Dendritic cell treated with granulocyte-macrophage colony-stimulating factor and Interleukin-4, amounts not matched to agents 40 ng/mL and 50 ng/mL, for 4 days (primary cell): ENCODE measurements at regions of chr18 and their contacts with region 1.

Region 1: GRCh38 chr18:70464343-70465114 is 175.7 kb downstream of the SOCS6 start:
- H3K4me3 Mint-ChIP-seq: peak overlapping the region; percentile 61
- H3K27ac Mint-ChIP-seq: no peak overlapping the region
- H3K4me1 Mint-ChIP-seq: peaks cover 25% of the 10 kb centered on the region
- H3K27me3 Mint-ChIP-seq: no peaks in the 10 kb centered on the region

Region 2: GRCh38 chr18:70116949-70117348 is 347.6 kb before region 1 on chr18:
- intact Hi-C with region 1: no loop called
- H3K4me3 Mint-ChIP-seq: no peak overlapping the region
- H3K27ac Mint-ChIP-seq: no peak overlapping the region
- H3K4me1 Mint-ChIP-seq: peaks cover 4% of the 10 kb centered on the region
- H3K27me3 Mint-ChIP-seq: no peaks in the 10 kb centered on the region

Region 3: GRCh38 chr18:70310560-70311320 is 153.8 kb before region 1 on chr18:
- intact Hi-C with region 1: no loop called
- H3K4me3 Mint-ChIP-seq: no peak overlapping the region
- H3K27ac Mint-ChIP-seq: no peak overlapping the region
- H3K4me1 Mint-ChIP-seq: peaks cover 36% of the 10 kb centered on the region
- H3K27me3 Mint-ChIP-seq: no peaks in the 10 kb centered on the region

Region 4: GRCh38 chr18:70337139-70337972 is 127.2 kb before region 1 on chr18:
- intact Hi-C with region 1: no loop called
- H3K4me3 Mint-ChIP-seq: no peak overlapping the region
- H3K27ac Mint-ChIP-seq: no peak overlapping the region
- H3K4me1 Mint-ChIP-seq: peaks cover 8% of the 10 kb centered on the region
- H3K27me3 Mint-ChIP-seq: no peaks in the 10 kb centered on the region

Region 5: DNA sequence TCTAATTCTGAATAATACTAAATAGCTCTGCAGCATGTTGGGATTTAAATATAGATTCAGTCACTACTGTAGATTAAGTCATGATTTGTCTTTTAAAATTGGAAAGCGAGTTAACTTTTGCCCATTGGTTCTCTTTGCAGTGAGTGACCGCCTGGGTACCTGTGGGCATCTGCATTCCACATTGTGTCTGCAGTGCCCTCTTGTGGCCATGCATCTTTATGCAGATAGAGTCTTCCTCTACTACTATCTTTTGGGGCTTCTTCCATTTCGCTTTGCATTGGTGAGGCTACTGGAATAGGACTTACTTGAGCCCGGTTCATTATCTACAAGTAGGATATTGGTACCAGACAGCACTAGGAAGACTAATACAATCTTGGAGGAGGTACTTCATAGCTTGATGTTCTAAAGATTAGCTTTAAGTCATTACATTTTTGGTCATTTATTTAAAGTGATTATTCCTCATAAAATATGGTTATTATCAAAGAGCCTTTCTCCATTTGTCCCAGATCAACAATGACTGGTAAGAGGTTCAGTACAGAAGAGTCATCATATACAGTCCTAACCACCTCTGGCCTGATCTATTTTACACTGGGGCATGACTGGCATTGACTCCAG is 27.3 kb after region 1 on chr18:
- intact Hi-C with region 1: loop called (anchors 1 kb)
- H3K4me3 Mint-ChIP-seq: no peak overlapping the region
- H3K27ac Mint-ChIP-seq: no peak overlapping the region
- H3K4me1 Mint-ChIP-seq: peaks cover 15% of the 10 kb centered on the region
- H3K27me3 Mint-ChIP-seq: no peaks in the 10 kb centered on the region

Region 6: GRCh38 chr18:71011389-71011788 is 546.9 kb after region 1 on chr18:
- intact Hi-C with region 1: no loop called
- H3K4me3 Mint-ChIP-seq: no peak overlapping the region
- H3K27ac Mint-ChIP-seq: no peak overlapping the region
- H3K4me1 Mint-ChIP-seq: no peaks in the 10 kb centered on the region
- H3K27me3 Mint-ChIP-seq: no peaks in the 10 kb centered on the region